H1 (cell line): ENCODE measurements at regions of chr16 and their contacts with region 1.

Region 1: DNA sequence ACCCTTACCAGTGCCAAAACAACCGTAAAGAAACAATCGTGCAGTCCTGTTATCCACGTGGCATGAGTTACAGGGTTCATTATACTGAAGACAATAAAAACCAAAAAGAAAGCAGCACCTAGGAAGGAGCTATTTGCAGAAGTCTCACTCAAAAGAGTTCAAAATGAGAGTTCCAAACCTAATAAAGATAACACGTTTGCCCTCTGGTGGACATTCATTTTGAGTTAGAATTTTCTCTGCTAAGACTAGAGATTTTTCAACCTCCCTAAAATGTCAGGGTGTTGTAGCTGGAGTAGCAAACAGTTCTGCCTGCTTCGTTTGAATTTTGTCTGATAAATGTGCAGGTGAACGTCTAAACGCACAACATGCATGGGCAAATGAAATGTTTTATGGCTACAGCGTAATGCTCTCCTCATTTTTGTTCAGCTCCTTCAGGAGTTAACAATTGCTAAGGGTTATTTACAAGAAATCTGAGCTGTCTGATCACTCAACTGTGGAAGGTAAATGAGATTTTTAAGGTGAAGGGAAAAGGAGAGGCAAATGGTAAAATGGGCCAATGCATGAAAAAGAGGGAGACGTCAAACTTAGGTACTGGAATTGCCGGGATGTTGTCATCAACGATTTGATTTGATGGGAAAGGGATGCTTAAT is 1067.9 kb upstream of the EEF2KMT start:
- DNase-seq: no peak
- H3K4me3 ChIP-seq: no peak overlapping the region
- H3K27ac ChIP-seq: no peak overlapping the region
- H3K4me1 ChIP-seq: peaks cover 0 to 8% (median 7%) of the 10 kb centered on the region in 4 experiments; a peak in 5 of 7 replicates
- H3K27me3 ChIP-seq: no peaks in the 10 kb centered on the region
- CTCF ChIP-seq: peak in 1 of 3 experiments; percentile 26; a peak in 2 of 4 replicates
- EP300 ChIP-seq: no peak
- POLR2A ChIP-seq: no peak
- RAD21 ChIP-seq: peak; percentile 28 to 45; a peak in 3 of 4 replicates

Region 2: DNA sequence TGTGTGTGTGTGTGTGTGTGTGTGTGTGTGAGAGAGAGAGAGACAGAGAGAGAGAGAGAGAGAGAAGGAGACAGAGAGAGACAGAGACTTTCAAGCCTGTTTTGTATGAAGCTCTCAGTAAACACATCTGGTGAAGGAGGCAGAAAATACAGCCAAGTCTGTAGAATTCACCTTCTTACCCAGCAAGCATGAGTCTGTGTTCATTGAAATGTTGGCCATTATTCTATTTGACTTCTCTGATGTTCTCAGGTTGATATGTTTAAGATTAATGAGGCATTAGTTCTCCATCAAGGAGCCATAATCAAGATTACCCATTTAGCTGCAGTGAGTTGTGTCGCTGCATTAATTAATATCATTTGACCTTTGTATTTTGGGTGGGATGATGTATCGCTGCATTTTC is 172.1 kb before region 1 on chr16:
- CTCF ChIA-PET with region 1: no interaction called
- POLR2A ChIA-PET with region 1: no interaction called
- DNase-seq: no peak
- H3K4me3 ChIP-seq: no peak overlapping the region
- H3K27ac ChIP-seq: no peak overlapping the region
- H3K4me1 ChIP-seq: peaks cover 0 to 2% (median 0%) of the 10 kb centered on the region in 4 experiments; a peak in 1 of 7 replicates
- H3K27me3 ChIP-seq: no peaks in the 10 kb centered on the region
- CTCF ChIP-seq: no peak
- EP300 ChIP-seq: no peak
- POLR2A ChIP-seq: no peak
- RAD21 ChIP-seq: no peak

Region 3: GRCh38 chr16:6132121-6132520 is 33.3 kb before region 1 on chr16:
- CTCF ChIA-PET with region 1: no interaction called
- POLR2A ChIA-PET with region 1: no interaction called
- DNase-seq: no peak
- H3K4me3 ChIP-seq: no peak overlapping the region
- H3K27ac ChIP-seq: no peak overlapping the region
- H3K4me1 ChIP-seq: no peaks in the 10 kb centered on the region
- H3K27me3 ChIP-seq: no peaks in the 10 kb centered on the region
- CTCF ChIP-seq: no peak
- EP300 ChIP-seq: no peak
- POLR2A ChIP-seq: no peak
- RAD21 ChIP-seq: peak in 1 of 2 experiments; percentile 24; a peak in 1 of 4 replicates

Region 4: GRCh38 chr16:6155271-6155670 is 10.2 kb before region 1 on chr16:
- CTCF ChIA-PET with region 1: interaction called, 10 read pairs
- POLR2A ChIA-PET with region 1: no interaction called
- DNase-seq: no peak
- H3K4me3 ChIP-seq: no peak overlapping the region
- H3K27ac ChIP-seq: no peak overlapping the region
- H3K4me1 ChIP-seq: no peaks in the 10 kb centered on the region
- H3K27me3 ChIP-seq: no peaks in the 10 kb centered on the region
- CTCF ChIP-seq: no peak
- EP300 ChIP-seq: no peak
- POLR2A ChIP-seq: no peak
- RAD21 ChIP-seq: no peak

Region 5: GRCh38 chr16:6177616-6178180 is 12.2 kb after region 1 on chr16:
- CTCF ChIA-PET with region 1: interaction called, 12 read pairs
- POLR2A ChIA-PET with region 1: no interaction called
- DNase-seq: no peak
- H3K4me3 ChIP-seq: no peak overlapping the region
- H3K27ac ChIP-seq: no peak overlapping the region
- H3K4me1 ChIP-seq: peaks cover 0 to 9% (median 2%) of the 10 kb centered on the region in 4 experiments; a peak in 4 of 7 replicates
- H3K27me3 ChIP-seq: no peaks in the 10 kb centered on the region
- CTCF ChIP-seq: no peak
- EP300 ChIP-seq: no peak
- POLR2A ChIP-seq: no peak
- RAD21 ChIP-seq: no peak